ENCODE measurements at regions of chr19 and their contacts with region 1.

Region 1: GRCh38 chr19:35228177-35228930 is at the start of gene FAM187B:
- DNase-seq: no peak
- H3K27ac ChIP-seq: no peak within 1 kb of the TSS
- CTCF ChIP-seq: no peak

Region 2: GRCh38 chr19:34519602-34520001 is 708.8 kb before region 1 on chr19:
- CTCF ChIA-PET with region 1: interaction called, 11 read pairs
- POLR2A ChIA-PET with region 1: no interaction called
- DNase-seq: no peak
- H3K27ac ChIP-seq: no peak overlapping the region
- CTCF ChIP-seq: no peak

Region 3: DNA sequence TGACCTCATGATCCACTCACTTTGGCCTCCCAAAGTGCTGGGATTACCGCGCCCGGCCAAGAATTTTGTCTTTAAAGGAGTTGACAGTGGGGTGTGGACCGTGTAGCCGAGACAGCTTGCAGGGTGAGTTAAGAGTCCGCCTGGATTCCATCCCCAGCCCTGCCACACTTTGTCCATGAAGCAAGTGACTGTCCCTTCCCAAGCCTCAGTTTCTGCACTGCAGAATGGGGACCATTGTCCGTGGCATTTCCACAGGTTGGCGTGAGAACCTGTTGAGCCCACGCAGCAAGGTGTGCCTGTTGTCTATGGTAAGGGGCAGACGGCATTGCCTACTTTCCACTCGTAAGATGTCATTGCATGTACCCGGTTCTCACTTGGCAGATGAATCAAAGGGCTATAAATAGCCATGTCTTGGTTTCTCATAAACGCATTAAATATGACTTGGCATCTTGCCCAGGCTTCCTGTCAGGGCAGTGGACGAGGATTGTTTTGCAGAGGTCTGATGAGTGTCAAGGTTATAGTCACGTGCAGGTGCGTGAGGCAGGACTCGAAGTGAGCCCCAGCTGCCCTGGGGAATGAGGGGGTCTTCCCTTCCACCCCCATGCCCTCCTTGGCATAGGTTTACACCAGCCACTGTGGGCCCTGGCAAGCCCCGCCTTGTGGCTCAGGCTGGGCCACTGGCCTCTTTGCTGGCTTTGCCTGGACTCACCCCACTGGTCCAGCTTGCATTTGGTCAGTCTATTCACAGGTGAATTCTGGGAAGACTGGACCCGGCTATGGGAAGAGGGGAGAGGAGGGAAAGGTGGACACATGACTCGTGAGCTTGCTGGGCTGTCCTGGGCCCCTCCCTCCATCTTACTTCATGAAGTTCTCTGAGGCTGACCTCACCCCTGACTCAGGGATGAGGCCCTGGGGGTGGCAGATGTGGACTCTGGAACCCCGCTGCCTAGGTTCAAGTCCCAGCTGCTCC is 14.4 kb before region 1 on chr19:
- CTCF ChIA-PET with region 1: no interaction called
- POLR2A ChIA-PET with region 1: no interaction called
- DNase-seq: peak; percentile 83
- H3K27ac ChIP-seq: peak overlapping the region; percentile 72
- CTCF ChIP-seq: no peak

Measured in RWPE1 (cell line).